ENCODE measurements at regions of chr22 and their contacts with region 1.

Region 1: GRCh38 chr22:24325105-24325757 is 54.6 kb downstream of the SPECC1L start:
- DNase-seq: peak; percentile 22
- H3K4me3 Mint-ChIP-seq: no peak overlapping the region
- H3K27ac Mint-ChIP-seq: peak overlapping the region; percentile 1
- H3K4me1 Mint-ChIP-seq: peaks cover 45% of the 10 kb centered on the region
- H3K27me3 Mint-ChIP-seq: no peaks in the 10 kb centered on the region

Region 2: DNA sequence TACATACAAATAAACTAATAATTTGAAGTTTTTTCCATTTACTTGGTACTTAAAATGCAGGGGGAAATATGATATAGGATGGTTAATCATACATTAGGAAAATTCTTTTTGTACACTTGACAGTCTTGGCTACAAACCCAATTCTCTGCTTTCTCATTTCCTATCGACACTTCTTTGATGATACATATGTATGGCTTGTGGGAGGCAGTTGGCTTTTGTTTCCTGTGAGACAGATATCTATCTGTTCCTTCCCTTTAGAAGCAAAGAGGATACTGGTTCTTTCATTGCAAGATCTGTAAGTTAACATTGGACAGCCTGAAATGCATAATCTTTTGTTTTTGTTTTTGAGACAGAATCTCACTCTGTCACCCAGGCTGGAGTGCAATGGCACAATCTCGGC is 54.3 kb after region 1 on chr22:
- intact Hi-C with region 1: loop called (anchors 5 kb)
- DNase-seq: no peak
- H3K4me3 Mint-ChIP-seq: no peak overlapping the region
- H3K27ac Mint-ChIP-seq: peak overlapping the region; percentile 35
- H3K4me1 Mint-ChIP-seq: peaks cover 30% of the 10 kb centered on the region
- H3K27me3 Mint-ChIP-seq: no peaks in the 10 kb centered on the region

Region 3: DNA sequence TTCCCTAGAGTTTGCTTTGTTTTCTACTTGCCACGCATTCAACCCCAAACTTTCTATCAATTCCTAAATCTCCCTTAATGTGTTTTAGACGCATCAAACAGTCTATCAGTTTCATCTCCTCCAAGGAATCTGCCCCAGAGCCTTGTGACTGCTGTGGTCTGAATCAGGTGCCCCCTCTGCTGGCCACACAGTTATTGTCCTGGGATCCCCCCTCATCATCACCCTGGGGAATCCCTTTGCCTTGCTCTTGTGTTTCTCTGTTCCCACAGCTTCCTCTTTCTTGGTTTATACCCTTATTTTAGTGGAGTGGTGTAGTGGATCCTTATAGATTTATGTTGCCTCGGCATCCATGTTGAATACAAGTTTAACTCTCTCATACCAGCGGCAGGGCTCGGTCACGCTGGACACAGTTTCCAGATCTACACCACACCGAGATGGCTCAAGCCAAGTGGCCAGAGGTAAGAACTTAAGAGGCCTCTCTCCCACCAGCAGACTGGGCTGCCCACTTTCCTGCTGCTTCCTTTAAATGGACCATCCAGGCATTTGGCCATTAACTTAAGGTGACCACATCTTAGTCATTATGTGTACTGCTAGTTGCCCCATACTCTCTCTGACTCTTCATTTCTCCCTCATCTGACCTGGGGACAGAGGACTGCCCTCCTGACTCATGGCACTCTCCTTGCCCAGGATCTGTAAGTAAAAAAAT is 178.1 kb after region 1 on chr22:
- intact Hi-C with region 1: loop called (anchors 1 kb)
- DNase-seq: no peak
- H3K4me3 Mint-ChIP-seq: no peak overlapping the region
- H3K27ac Mint-ChIP-seq: no peak overlapping the region
- H3K4me1 Mint-ChIP-seq: peaks cover 31% of the 10 kb centered on the region
- H3K27me3 Mint-ChIP-seq: peaks cover 8% of the 10 kb centered on the region